Left ventricle myocardium inferior (tissue), 1 donor: ENCODE measurements at regions of chr3 and their contacts with region 1.

Region 1: DNA sequence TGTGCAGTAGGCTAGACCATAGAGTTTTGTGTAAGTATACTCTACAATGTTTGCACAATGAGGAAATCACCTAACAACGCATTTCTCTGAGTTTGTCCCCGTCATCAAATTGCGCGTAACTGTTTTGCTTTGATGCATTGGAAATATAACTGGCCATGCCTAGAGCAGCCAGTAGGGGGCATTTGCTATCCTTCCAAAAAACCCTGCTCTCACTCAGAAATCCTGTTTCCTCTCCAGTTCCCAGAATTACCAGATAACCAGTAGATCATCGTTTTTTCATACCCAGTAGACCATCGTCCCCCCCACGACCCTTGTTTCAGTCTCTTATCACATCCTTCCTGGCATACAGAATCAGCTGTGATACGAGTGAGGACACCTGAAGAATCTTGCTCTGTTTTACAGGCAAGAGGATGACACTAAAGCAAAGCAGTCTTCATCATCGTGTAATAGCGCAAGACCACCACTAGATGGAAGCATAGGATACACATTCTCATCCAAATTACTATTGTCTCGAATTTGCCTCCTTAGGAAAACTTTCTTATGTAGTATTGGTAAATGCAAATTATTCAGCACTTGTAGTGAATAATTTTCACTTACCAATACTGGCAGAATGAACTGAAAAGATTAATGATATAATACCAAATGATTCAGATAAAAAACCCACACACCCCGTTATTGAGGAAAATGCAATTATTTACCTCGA is 4.4 kb upstream of the GABRR3 start:
- DNase-seq: peak; percentile 14
- H3K4me3 ChIP-seq: peak overlapping the region; percentile 44
- H3K27ac ChIP-seq: no peak overlapping the region
- H3K4me1 ChIP-seq: peaks cover 5% of the 10 kb centered on the region
- H3K27me3 ChIP-seq: peaks cover 39% of the 10 kb centered on the region
- CTCF ChIP-seq: peak; percentile 88

Region 2: DNA sequence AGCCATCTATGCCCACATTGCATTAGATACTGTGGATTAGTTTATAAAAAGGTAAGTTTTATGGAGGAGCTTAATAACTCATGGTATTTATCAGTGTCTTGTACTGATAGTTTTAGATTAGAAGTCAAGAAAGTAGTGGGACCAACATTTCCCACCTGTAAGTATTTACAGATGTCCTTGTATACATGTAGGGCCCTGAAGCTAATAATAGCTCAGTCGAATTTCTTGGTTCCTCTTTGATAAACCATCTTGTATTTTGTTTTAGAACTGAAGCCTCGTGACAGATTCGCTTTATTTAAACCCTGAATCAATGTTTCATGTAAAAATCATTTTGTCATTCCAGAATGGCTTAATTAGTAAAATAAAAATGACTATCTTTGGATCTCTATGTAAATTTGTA is 144.3 kb before region 1 on chr3:
- intact Hi-C with region 1: no loop called
- DNase-seq: no peak
- H3K4me3 ChIP-seq: no peak overlapping the region
- H3K27ac ChIP-seq: no peak overlapping the region
- H3K4me1 ChIP-seq: peaks cover 3% of the 10 kb centered on the region
- H3K27me3 ChIP-seq: no peaks in the 10 kb centered on the region
- CTCF ChIP-seq: no peak

Region 3: GRCh38 chr3:98329392-98330124 is 290.1 kb after region 1 on chr3:
- intact Hi-C with region 1: loop called (anchors 5 kb)
- DNase-seq: peak; percentile 12
- H3K4me3 ChIP-seq: no peak overlapping the region
- H3K27ac ChIP-seq: no peak overlapping the region
- H3K4me1 ChIP-seq: no peaks in the 10 kb centered on the region
- H3K27me3 ChIP-seq: peaks cover 29% of the 10 kb centered on the region
- CTCF ChIP-seq: peak; percentile 66

Region 4: GRCh38 chr3:98513091-98513511 is 473.6 kb after region 1 on chr3:
- intact Hi-C with region 1: no loop called
- DNase-seq: no peak
- H3K4me3 ChIP-seq: no peak overlapping the region
- H3K27ac ChIP-seq: no peak overlapping the region
- H3K4me1 ChIP-seq: peaks cover 13% of the 10 kb centered on the region
- H3K27me3 ChIP-seq: no peaks in the 10 kb centered on the region
- CTCF ChIP-seq: no peak